Mammary epithelial cell (primary cell): ENCODE measurements at regions of chr6 and their contacts with region 1.

Region 1: GRCh38 chr6:3013479-3013878 is 13.8 kb downstream of the NQO2 start:
- DNase-seq: peak; percentile 83
- H3K4me3 ChIP-seq: no peak overlapping the region
- H3K27ac ChIP-seq: no peak overlapping the region
- H3K4me1 ChIP-seq: peaks cover 13% of the 10 kb centered on the region
- H3K27me3 ChIP-seq: no peaks in the 10 kb centered on the region
- CTCF ChIP-seq: no peak

Region 2: DNA sequence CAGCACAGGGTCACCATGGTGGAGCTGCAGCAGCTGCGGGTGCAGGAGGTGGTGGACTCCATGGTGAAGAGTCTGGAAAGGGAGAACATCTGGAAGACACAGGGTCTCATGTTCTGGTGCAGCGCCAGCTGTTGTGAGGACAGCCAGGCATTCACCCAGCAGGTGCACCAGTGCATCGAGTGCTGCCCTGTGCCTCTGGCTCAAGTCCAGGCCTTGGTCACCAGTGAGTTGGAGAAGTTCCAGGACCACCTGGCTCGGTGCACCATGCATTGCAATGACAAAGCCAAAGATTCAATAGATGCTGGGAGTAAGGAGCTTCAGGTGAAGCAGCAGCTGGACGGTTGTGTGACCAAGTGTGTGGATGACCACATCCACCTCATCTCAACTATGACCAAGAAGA is 31.9 kb after region 1 on chr6:
- CTCF ChIA-PET with region 1: no interaction called
- dilution Hi-C with region 1: no loop called
- in situ Hi-C with region 1: loop called in 1 of 2 experiments (anchors 5 kb)
- intact Hi-C with region 1: no loop called
- DNase-seq: no peak
- H3K4me3 ChIP-seq: no peak overlapping the region
- H3K27ac ChIP-seq: no peak overlapping the region
- H3K4me1 ChIP-seq: no peaks in the 10 kb centered on the region
- H3K27me3 ChIP-seq: no peaks in the 10 kb centered on the region
- CTCF ChIP-seq: no peak